ENCODE measurements at regions of chr2 and their contacts with region 1.

Region 1: DNA sequence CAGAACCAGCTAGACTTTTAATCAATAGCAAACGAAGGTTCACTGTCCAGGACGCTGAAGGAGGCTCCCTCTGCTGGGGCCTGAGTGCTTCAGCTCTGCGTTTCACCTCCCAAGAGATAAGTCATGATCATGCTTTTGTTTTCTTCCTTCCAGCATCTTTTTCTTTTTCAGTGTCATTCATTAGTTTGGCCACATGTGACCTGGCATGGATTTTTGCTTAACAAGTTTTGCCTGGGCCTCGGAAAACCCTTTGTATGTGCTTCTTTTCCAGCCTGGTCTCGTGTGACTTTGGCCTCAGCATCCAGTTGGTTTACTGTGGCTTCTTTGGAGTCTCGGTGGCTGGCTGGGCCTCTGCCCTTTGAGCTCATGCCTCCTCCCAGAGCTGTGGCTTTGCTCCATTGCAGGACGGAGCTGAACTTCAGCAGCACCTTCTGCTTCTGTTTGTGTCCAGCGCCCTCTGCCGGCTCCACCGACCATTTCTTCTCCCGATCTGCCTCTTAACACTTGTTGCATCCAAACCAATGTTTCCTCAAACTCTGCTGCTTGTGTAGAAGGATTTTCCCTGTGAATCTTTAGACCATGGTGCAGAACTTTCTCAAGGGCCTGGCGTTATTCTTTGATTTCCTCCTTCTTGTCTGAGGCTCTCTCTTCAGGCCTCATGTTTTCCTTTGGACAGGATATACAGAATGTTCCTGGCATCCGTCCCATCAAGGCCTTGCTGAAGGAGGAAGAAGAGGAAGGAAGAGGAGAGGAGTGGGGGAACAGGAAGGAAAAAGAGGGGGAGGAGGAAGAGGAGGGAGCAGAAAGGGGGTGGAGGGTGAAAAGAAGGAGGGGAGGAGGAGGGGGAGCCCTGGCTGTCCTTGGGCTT is 23.6 kb upstream of the HES6 start:
- DNase-seq: peak; percentile 73
- ATAC-seq: peak; percentile 83
- H3K4me3 ChIP-seq: no peak overlapping the region
- H3K27ac ChIP-seq: peak overlapping the region; percentile 20
- H3K4me1 ChIP-seq: peaks cover 3 to 13% of the 10 kb centered on the region in 2 experiments; a peak in 3 of 4 replicates
- H3K27me3 ChIP-seq: no peaks in the 10 kb centered on the region
- CTCF ChIP-seq: peak; percentile 68 to 83 (median 71)
- POLR2A ChIP-seq: no peak
- RAD21 ChIP-seq: peak; percentile 82

Region 2: DNA sequence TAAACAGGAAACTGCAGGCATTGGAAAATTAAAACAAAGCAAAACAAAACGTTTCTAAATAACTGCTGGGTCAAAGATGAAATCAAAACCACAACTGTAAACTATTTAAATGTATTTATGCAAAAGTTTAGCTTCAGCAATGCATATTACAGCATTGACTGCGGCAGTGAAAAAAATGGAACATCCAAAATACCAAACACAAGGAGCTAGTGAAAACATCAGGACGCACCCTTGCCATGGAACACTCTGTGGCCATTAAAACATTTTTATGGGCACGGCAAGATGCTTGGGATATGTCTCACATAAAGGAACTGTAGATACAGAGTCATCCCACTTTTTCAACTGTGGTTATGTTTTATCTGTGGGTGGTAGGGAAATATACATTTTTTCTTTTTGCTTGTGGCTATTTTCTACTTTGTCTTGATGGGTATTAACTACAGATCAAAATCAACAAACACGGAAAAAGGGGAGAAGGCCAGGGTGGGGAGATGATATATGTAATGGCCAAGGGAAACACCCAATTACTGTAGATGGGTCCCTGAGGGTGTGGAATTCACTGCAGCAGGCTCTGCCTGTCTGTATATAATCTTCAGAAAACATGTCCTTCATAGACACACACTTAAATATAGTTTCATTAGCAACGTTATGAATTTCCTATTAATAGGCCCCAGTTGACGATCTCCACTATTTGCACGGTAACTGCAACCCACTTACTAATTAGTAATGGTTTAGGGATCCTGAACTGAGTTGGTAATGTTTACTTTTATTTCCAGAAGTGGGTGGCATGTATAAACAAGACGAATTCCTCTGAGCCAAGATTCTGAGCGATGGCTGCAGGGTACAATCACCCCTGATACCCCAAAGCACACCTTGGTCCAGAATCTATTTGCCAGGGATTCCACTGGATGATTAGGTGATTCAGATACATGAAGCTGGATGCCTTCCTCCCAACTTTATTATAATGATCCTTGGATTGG is 1583.3 kb before region 1 on chr2:
- CTCF ChIA-PET with region 1: no interaction called
- POLR2A ChIA-PET with region 1: no interaction called
- RAD21 ChIA-PET with region 1: no interaction called
- intact Hi-C with region 1: no loop called
- DNase-seq: no peak
- ATAC-seq: no peak
- H3K4me3 ChIP-seq: no peak overlapping the region
- H3K27ac ChIP-seq: no peak overlapping the region
- H3K4me1 ChIP-seq: no peaks in the 10 kb centered on the region
- H3K27me3 ChIP-seq: peaks cover 62% of the 10 kb centered on the region
- CTCF ChIP-seq: no peak
- POLR2A ChIP-seq: no peak
- RAD21 ChIP-seq: no peak

Region 3: GRCh38 chr2:237766340-237766739 is 497.1 kb before region 1 on chr2:
- CTCF ChIA-PET with region 1: no interaction called
- POLR2A ChIA-PET with region 1: no interaction called
- RAD21 ChIA-PET with region 1: no interaction called
- intact Hi-C with region 1: no loop called
- DNase-seq: no peak
- ATAC-seq: no peak
- H3K4me3 ChIP-seq: no peak overlapping the region
- H3K27ac ChIP-seq: no peak overlapping the region
- H3K4me1 ChIP-seq: no peaks in the 10 kb centered on the region
- H3K27me3 ChIP-seq: no peaks in the 10 kb centered on the region
- CTCF ChIP-seq: no peak
- POLR2A ChIP-seq: no peak
- RAD21 ChIP-seq: no peak

Region 4: GRCh38 chr2:237923481-237924163 is 339.8 kb before region 1 on chr2:
- CTCF ChIA-PET with region 1: no interaction called
- POLR2A ChIA-PET with region 1: no interaction called
- RAD21 ChIA-PET with region 1: no interaction called
- intact Hi-C with region 1: loop called (anchors 5 kb)
- DNase-seq: peak; percentile 29
- ATAC-seq: peak; percentile 91
- H3K4me3 ChIP-seq: peak overlapping the region; percentile 35 to 45
- H3K27ac ChIP-seq: peak overlapping the region; percentile 51; the same call in 1 of the 2 replicates
- H3K4me1 ChIP-seq: peaks cover 13 to 23% of the 10 kb centered on the region in 2 experiments
- H3K27me3 ChIP-seq: no peaks in the 10 kb centered on the region
- CTCF ChIP-seq: peak; percentile 69 to 99 (median 93)
- POLR2A ChIP-seq: no peak
- RAD21 ChIP-seq: peak; percentile 73

Region 5: DNA sequence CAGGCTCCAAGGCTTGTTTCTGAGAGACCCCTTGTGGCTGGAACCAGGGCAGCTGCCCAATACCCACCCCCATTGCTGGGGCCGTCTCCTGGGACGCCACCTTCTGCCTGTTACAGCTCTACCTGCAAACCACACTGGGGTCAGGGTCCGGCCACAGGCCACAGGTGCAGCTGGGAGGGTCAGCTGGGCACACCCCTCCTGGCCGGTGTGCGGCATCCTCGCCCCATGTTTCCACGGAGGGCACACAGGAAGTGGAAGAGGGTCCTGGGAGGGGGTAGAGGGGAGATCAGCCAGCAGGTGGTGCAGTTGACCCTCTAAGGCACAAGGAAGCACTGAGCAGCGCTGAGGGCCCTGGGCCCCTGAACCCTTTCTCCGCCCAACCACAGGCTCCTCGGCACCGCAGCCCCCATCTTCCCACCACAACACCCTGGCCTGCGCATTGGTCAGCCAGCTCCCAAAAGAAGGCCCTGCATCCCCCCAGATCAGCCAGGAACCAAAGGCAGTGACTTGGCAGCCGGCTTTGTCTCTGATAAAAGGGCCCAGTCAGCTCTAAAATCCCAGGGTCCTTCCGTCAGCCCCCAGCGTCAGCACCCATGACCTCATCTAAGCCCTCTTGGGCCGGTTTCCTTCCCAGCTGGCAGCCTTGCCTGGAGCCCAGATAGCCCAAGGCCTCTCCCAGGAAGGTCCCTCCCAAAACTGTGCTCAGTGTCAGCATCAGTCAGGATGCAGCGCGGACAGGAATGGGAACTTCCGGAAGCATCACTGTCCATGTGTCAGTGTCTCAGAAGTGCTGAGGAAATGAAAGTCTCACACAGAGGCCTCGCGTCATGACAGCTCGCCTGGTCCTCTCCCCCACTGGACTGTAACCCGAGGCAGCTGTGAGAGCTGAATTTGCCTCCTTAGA is 103.0 kb before region 1 on chr2:
- CTCF ChIA-PET with region 1: no interaction called
- POLR2A ChIA-PET with region 1: no interaction called
- RAD21 ChIA-PET with region 1: no interaction called
- intact Hi-C with region 1: loop called (anchors 1 kb)
- DNase-seq: no peak
- ATAC-seq: no peak
- H3K4me3 ChIP-seq: peak overlapping the region in 1 of 2 experiments; percentile 71; a peak in 1 of 4 replicates
- H3K27ac ChIP-seq: no peak overlapping the region
- H3K4me1 ChIP-seq: peaks cover 4 to 12% of the 10 kb centered on the region in 2 experiments; a peak in 3 of 4 replicates
- H3K27me3 ChIP-seq: no peaks in the 10 kb centered on the region
- CTCF ChIP-seq: peak in 2 of 3 experiments; percentile 21 to 34; a peak in 2 of 6 replicates
- POLR2A ChIP-seq: no peak
- RAD21 ChIP-seq: peak; percentile 26; the same call in 1 of the 2 replicates